ENCODE measurements at regions of chr13 and their contacts with region 1.

Region 1: DNA sequence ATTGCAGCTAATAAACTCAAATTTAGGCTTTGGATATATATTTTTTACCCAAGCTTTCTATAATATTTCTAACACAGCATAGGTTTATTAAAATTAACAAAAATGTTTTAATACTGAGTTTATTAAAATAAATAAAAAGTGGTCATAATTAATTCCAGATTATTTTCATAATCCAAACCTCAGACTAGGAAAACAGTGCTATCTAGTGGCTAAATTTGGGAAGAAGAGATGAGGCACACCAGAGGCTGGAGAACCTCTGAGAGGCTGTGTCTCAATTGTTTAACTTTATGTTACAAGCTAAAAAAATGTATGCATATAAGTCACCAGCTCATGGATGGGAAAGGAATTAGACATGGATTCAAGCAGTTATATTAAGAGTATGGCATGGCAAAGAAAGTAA is 392.5 kb downstream of the DIAPH3 start:
- DNase-seq: no peak
- ATAC-seq: no peak
- H3K4me3 ChIP-seq: no peak overlapping the region
- H3K27ac ChIP-seq: no peak overlapping the region
- H3K4me1 ChIP-seq: no peaks in the 10 kb centered on the region
- H3K27me3 ChIP-seq: no peaks in the 10 kb centered on the region
- CTCF ChIP-seq: peak; percentile 19 to 58 (median 51); a peak in 4 of 6 replicates
- POLR2A ChIP-seq: no peak
- RAD21 ChIP-seq: peak; percentile 38; the same call in 1 of the 2 replicates

Region 2: DNA sequence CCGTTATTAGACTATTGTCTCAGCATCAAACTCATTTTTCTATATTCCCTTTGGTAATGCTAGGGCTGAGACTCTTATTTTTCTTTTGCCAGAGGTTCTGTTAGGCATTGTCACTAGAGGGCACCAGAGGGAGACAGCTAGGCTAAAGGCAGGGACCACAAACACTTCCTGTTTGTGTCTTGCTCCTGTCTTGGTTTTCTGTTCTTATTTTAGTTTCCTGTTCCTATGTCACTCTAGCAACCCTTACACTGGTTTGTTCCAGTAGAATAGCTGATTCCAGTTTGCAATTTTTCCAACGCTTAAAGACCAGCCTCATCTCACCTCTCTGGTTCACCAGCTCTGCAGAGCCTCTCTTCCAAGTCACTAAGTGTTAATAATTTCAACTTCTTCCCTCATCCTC is 379.6 kb before region 1 on chr13:
- CTCF ChIA-PET with region 1: no interaction called
- POLR2A ChIA-PET with region 1: no interaction called
- RAD21 ChIA-PET with region 1: no interaction called
- intact Hi-C with region 1: loop called (anchors 2 kb)
- DNase-seq: peak; percentile 16
- ATAC-seq: peak; percentile 77
- H3K4me3 ChIP-seq: no peak overlapping the region
- H3K27ac ChIP-seq: no peak overlapping the region
- H3K4me1 ChIP-seq: no peaks in the 10 kb centered on the region
- H3K27me3 ChIP-seq: no peaks in the 10 kb centered on the region
- CTCF ChIP-seq: peak; percentile 4 to 73 (median 69); a peak in 4 of 6 replicates
- POLR2A ChIP-seq: no peak
- RAD21 ChIP-seq: peak; percentile 33; the same call in 1 of the 2 replicates

Region 3: DNA sequence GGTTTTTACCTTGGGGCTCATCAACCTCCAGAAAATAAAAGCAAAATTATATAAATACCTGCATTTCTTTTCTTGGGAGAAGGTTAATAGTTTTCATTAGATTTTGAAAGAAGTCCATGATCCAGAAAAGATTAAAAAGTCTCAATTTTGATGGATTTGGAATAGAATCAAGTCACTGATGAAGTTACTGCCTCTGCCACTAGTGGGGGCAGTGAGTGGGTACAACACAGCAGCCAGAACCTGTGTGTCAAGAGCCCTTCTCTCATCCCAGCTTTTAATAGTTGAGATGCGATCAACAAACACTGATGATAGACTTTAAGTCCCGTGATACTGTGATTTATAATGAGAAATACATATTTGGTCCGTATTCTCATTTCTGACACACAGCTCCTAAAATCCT is 294.3 kb before region 1 on chr13:
- CTCF ChIA-PET with region 1: no interaction called
- POLR2A ChIA-PET with region 1: no interaction called
- RAD21 ChIA-PET with region 1: no interaction called
- intact Hi-C with region 1: loop called (anchors 10 kb)
- DNase-seq: peak; percentile 6
- ATAC-seq: peak; percentile 52; the same call in 1 of the 2 replicates
- H3K4me3 ChIP-seq: no peak overlapping the region
- H3K27ac ChIP-seq: no peak overlapping the region
- H3K4me1 ChIP-seq: no peaks in the 10 kb centered on the region
- H3K27me3 ChIP-seq: no peaks in the 10 kb centered on the region
- CTCF ChIP-seq: peak in 2 of 3 experiments; percentile 57 to 59; a peak in 4 of 6 replicates
- POLR2A ChIP-seq: no peak
- RAD21 ChIP-seq: no peak

Region 4: DNA sequence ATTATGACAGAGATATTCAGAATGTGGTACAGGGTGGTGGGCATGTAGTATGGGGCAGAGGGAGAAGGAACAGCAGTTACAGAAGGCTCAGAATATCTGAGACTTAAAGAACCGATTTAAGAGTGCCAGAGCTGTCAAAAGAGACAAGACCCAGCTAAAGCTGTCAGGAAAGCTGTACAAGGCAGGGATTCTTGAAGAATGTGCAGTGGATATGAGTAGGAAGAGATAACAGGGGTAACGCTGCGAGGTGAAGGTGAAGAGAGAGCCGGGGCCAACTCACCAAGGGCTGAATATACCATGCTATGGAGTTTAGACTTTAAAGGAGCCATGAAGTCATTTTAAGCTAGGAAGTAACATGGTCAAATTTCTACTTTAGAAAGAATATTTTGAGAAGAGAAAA is 11.4 kb after region 1 on chr13:
- CTCF ChIA-PET with region 1: interaction called, 10 read pairs
- POLR2A ChIA-PET with region 1: no interaction called
- RAD21 ChIA-PET with region 1: no interaction called
- intact Hi-C with region 1: no loop called
- DNase-seq: no peak
- ATAC-seq: no peak
- H3K4me3 ChIP-seq: no peak overlapping the region
- H3K27ac ChIP-seq: no peak overlapping the region
- H3K4me1 ChIP-seq: no peaks in the 10 kb centered on the region
- H3K27me3 ChIP-seq: no peaks in the 10 kb centered on the region
- CTCF ChIP-seq: no peak
- POLR2A ChIP-seq: no peak
- RAD21 ChIP-seq: no peak

Region 5: DNA sequence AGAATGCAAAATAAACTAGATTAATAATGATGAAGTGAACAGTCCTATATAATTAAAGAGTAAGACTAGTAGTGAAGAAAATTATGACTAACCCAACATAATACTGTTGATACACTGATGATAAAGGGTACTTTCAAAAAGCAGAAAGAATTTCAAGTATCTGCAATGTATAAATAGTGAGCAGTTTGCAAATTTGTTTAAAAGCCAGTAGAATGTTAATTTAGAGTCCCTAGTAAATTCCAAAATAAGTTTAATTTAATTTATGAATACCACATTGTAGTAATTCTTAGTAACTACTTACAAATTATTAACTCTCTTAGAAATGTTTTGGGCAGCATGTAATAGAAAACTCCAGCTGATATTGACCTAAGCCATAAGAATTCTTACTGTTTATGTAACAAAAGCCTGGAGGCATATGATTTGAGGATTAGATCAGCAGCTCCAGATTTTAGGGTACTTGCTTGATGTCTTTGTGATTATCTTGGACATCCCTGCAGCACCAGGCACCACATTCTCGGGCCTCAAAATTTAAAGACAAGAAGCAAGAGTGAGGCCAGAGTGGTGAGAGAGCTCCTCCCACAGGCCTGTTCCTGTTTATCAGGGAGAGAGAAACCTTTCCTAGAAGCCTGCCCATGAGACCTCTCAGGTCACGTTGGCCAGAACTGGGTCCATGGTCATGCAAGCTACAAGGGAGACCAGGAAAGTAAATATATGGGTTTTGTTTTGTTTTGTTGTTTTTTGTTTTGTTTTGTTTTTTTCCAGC is 558.1 kb after region 1 on chr13:
- CTCF ChIA-PET with region 1: interaction called, 3 read pairs
- POLR2A ChIA-PET with region 1: no interaction called
- RAD21 ChIA-PET with region 1: no interaction called
- intact Hi-C with region 1: loop called (anchors 5 kb)
- DNase-seq: peak; percentile 18
- ATAC-seq: peak; percentile 86
- H3K4me3 ChIP-seq: no peak overlapping the region
- H3K27ac ChIP-seq: no peak overlapping the region
- H3K4me1 ChIP-seq: no peaks in the 10 kb centered on the region
- H3K27me3 ChIP-seq: peaks cover 9% of the 10 kb centered on the region; the same call in 1 of the 2 replicates
- CTCF ChIP-seq: peak; percentile 20 to 57 (median 39); a peak in 4 of 6 replicates
- POLR2A ChIP-seq: no peak
- RAD21 ChIP-seq: peak; percentile 60

Region 6: GRCh38 chr13:60583911-60584753 is 812.9 kb after region 1 on chr13:
- CTCF ChIA-PET with region 1: no interaction called
- POLR2A ChIA-PET with region 1: no interaction called
- RAD21 ChIA-PET with region 1: no interaction called
- intact Hi-C with region 1: no loop called
- DNase-seq: no peak
- ATAC-seq: no peak
- H3K4me3 ChIP-seq: no peak overlapping the region
- H3K27ac ChIP-seq: no peak overlapping the region
- H3K4me1 ChIP-seq: no peaks in the 10 kb centered on the region
- H3K27me3 ChIP-seq: no peaks in the 10 kb centered on the region
- CTCF ChIP-seq: no peak
- POLR2A ChIP-seq: no peak
- RAD21 ChIP-seq: no peak